Motor neuron (in vitro differentiated cells): ENCODE measurements at regions of chr5 and their contacts with region 1.

Region 1: GRCh38 chr5:122704243-122705036 is 70.4 kb upstream of the SNX2 start:
- ATAC-seq: peak in 3 of 8 experiments; percentile 68 to 82 (median 77)
- H3K4me3 ChIP-seq: no peak overlapping the region
- H3K27ac ChIP-seq: no peak overlapping the region
- H3K4me1 ChIP-seq: no peaks in the 10 kb centered on the region

Region 2: DNA sequence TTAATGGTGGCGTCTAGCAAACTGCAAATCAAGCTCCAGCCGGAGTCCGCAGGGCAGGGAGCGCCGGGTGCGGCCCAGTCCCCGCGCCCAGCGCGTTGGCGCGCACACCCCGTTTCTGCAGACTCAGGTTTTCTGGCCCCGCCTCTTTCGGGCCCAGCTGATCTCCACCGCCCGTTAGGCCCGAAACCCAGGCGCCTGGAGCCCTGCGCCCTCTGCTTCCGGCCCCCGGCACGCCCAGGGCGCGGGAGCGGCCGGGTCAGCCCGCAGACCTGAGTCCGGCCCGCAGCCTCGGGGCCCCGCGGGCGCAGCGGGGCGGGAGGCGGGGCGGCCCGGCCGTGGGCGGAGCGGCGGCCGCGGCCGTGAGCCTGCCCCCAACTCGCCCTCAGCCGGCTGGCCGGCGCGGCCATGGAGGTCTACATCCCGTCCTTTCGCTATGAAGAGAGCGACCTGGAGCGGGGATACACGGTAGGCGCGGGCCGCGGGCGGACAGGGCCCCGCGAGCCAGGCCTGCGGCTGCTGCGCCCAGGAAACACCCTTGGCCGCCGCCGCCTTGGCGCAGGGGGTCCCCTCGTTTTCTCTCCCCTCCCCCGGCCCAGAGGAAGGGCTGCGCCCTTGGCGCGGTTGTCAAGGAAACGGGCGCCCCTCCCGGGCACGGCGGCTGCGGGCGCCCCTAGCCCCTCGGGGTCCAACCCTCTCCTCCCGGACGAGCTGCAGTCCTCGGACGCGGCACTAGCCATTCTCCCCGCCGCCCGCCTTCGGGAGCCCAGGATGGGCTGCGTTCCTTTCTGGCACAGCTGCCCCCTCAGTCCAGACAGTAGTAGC is 141.0 kb after region 1 on chr5 and contains the start of gene SNX24:
- in situ Hi-C with region 1: loop called in 1 of 9 experiments (anchors 25 kb)
- ATAC-seq: peak; percentile 83 to 91 (median 87)
- H3K4me3 ChIP-seq: peak within 1 kb of the TSS; percentile 57 to 82 (median 75)
- H3K27ac ChIP-seq: peak within 1 kb of the TSS; percentile 79 to 90
- H3K4me1 ChIP-seq: peaks cover 6 to 20% of the 10 kb centered on the region in 2 donors
- total RNA-seq, gene SNX24: 5.9 to 32.2 (median 14.9) TPM

Region 3: DNA sequence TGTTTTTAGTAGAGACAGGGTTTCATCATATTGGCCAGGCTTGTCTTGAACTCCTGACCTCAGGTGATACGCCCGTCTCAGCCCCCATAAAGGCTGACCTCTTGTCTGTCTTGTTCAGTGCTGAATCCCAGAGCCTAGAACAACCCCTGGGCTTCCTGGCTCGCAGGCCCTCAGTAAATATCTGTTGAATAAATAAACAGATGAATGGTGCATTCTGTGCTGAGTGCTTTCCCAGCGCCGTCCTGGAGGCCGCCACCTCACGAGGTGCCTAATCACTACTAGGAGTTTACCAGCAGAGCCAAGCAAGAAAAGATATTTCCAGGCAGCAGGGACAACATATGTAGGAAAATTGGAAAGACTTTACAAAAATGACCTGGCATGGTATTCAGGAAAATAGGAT is 229.5 kb after region 1 on chr5:
- in situ Hi-C with region 1: no loop called
- ATAC-seq: peak in 1 of 8 experiments; percentile 32
- H3K4me3 ChIP-seq: no peak overlapping the region
- H3K27ac ChIP-seq: no peak overlapping the region
- H3K4me1 ChIP-seq: no peaks in the 10 kb centered on the region